ENCODE measurements at regions of chr4 and their contacts with region 1.

Region 1: GRCh38 chr4:10013722-10014121 is 7.6 kb downstream of the SLC2A9 start:
- DNase-seq: peak; percentile 34
- H3K4me3 Mint-ChIP-seq: no peak overlapping the region
- H3K27ac Mint-ChIP-seq: no peak overlapping the region
- H3K4me1 Mint-ChIP-seq: no peaks in the 10 kb centered on the region
- H3K27me3 Mint-ChIP-seq: no peaks in the 10 kb centered on the region

Region 2: GRCh38 chr4:9704551-9705332 is 309.0 kb before region 1 on chr4:
- intact Hi-C with region 1: loop called (anchors 2 kb)
- DNase-seq: no peak
- H3K4me3 Mint-ChIP-seq: no peak overlapping the region
- H3K27ac Mint-ChIP-seq: no peak overlapping the region
- H3K4me1 Mint-ChIP-seq: peaks cover 11% of the 10 kb centered on the region
- H3K27me3 Mint-ChIP-seq: no peaks in the 10 kb centered on the region

Region 3: DNA sequence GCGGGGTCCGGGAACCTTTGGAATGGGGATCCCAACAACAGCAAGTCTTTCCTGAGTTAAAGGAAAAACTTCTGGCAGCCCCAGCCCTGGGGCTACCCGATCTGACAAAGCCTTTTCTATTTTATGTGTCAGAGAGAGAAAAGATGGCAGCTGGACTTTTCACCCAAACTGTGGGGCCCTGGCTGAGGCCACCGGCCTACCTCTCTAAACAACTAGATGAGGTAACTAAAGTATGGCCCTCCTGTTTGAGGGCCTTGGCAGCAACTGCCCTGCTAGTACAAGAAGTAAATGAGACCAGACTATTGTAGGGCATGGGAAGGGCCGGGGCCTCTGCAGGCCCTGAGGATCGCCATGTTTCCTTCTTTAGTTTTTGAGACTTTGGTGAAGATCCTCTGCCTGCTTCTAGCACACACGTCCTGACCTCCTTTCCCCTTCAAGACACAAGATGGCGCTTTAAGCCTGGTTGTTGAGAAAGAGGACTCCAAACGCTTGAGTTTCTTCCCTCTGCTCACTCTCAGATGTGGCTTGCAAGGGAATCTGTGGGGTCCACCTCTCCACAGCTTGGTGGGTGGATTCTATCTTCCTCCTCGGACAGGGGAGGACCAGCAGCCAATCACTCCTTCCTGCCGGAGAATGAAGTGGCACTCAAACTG is 250.8 kb before region 1 on chr4:
- intact Hi-C with region 1: loop called (anchors 1 kb)
- DNase-seq: peak; percentile 40
- H3K4me3 Mint-ChIP-seq: no peak overlapping the region
- H3K27ac Mint-ChIP-seq: no peak overlapping the region
- H3K4me1 Mint-ChIP-seq: no peaks in the 10 kb centered on the region
- H3K27me3 Mint-ChIP-seq: peaks cover 12% of the 10 kb centered on the region